PC-9 (cell line): ENCODE measurements at regions of chr15 and their contacts with region 1.

Region 1: GRCh38 chr15:75684642-75685041 is 28.0 kb downstream of the CSPG4 start:
- DNase-seq: no peak
- H3K4me3 ChIP-seq: no peak overlapping the region
- H3K27ac ChIP-seq: no peak overlapping the region
- H3K4me1 ChIP-seq: no peaks in the 10 kb centered on the region
- H3K27me3 ChIP-seq: no peaks in the 10 kb centered on the region
- CTCF ChIP-seq: no peak

Region 2: GRCh38 chr15:75508840-75509532 is 175.7 kb before region 1 on chr15:
- CTCF ChIA-PET with region 1: no interaction called
- POLR2A ChIA-PET with region 1: no interaction called
- intact Hi-C with region 1: loop called (anchors 5 kb)
- DNase-seq: peak in 1 of 2 experiments; percentile 10
- H3K4me3 ChIP-seq: no peak overlapping the region
- H3K27ac ChIP-seq: no peak overlapping the region
- H3K4me1 ChIP-seq: no peaks in the 10 kb centered on the region
- H3K27me3 ChIP-seq: no peaks in the 10 kb centered on the region
- CTCF ChIP-seq: peak; percentile 67

Region 3: DNA sequence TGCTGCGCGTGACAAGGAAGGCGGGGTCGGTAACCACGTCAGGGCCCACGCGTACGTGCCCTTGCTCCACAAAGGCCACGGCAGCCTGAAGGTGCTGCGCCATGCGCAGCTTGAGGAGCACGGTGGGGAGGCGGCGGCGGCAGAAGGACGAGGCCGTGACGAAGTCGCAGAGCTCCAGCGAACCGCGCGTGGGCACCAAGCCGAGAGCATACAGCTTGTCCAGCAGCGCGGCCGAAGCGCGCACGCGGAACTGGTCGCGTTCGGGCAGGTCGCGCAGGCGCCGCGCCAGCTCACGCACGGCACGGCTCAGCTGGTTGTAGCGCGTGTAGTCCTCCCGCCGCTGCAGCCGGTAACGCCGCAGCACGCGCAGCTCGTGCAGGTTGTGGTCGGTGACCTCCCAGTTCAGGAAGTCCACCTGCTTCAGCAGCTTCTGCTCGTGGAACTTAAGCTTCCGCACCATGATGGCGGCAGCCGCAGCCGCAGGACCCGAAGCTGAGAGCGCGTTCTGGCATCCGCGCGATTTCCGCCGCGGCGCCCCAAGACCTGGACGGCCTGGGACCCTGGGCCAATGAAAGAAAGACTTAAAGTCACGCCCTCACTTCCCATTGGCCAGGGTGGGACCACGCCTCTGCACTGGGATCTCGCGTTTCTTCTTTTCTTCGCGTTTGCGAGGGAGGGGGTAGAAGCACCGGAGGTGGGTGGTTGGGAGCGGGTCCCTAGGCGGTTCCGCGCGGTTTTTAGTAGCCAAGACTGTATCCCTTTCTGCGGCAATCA is 44.7 kb before region 1 on chr15 and contains the start of gene IMP3:
- CTCF ChIA-PET with region 1: interaction called, 3 read pairs
- POLR2A ChIA-PET with region 1: interaction called, 3 read pairs
- intact Hi-C with region 1: loop called (anchors 2 kb)
- DNase-seq: peak; percentile 92 to 93
- H3K4me3 ChIP-seq: peak within 1 kb of the TSS; percentile 88
- H3K27ac ChIP-seq: peak within 1 kb of the TSS; percentile 70
- H3K4me1 ChIP-seq: peaks cover 38% of the 10 kb centered on the region
- H3K27me3 ChIP-seq: no peaks in the 10 kb centered on the region
- CTCF ChIP-seq: no peak
- total RNA-seq, gene IMP3: 45.4 and 53.0 TPM in 2 replicates

Region 4: GRCh38 chr15:75732809-75733451 is 48.3 kb after region 1 on chr15:
- CTCF ChIA-PET with region 1: no interaction called
- POLR2A ChIA-PET with region 1: no interaction called
- intact Hi-C with region 1: loop called (anchors 1 kb)
- DNase-seq: peak in 1 of 2 experiments; percentile 71
- H3K4me3 ChIP-seq: no peak overlapping the region
- H3K27ac ChIP-seq: no peak overlapping the region
- H3K4me1 ChIP-seq: no peaks in the 10 kb centered on the region
- H3K27me3 ChIP-seq: no peaks in the 10 kb centered on the region
- CTCF ChIP-seq: peak; percentile 85

Region 5: GRCh38 chr15:76006136-76006778 is 321.6 kb after region 1 on chr15:
- CTCF ChIA-PET with region 1: no interaction called
- POLR2A ChIA-PET with region 1: no interaction called
- intact Hi-C with region 1: no loop called
- DNase-seq: no peak
- H3K4me3 ChIP-seq: no peak overlapping the region
- H3K27ac ChIP-seq: no peak overlapping the region
- H3K4me1 ChIP-seq: peaks cover under 1% of the 10 kb centered on the region; the same call in 1 of the 2 replicates
- H3K27me3 ChIP-seq: no peaks in the 10 kb centered on the region
- CTCF ChIP-seq: no peak

Region 6: GRCh38 chr15:77633134-77633912 is 1948.7 kb after region 1 on chr15:
- CTCF ChIA-PET with region 1: interaction called, 11 read pairs
- POLR2A ChIA-PET with region 1: no interaction called
- intact Hi-C with region 1: no loop called
- DNase-seq: peak; percentile 43 to 90
- H3K4me3 ChIP-seq: peak overlapping the region; percentile 42; the same call in 1 of the 2 replicates
- H3K27ac ChIP-seq: no peak overlapping the region
- H3K4me1 ChIP-seq: no peaks in the 10 kb centered on the region
- H3K27me3 ChIP-seq: peaks cover 52% of the 10 kb centered on the region
- CTCF ChIP-seq: peak; percentile 96